ENCODE measurements at regions of chr12 and their contacts with region 1.

Region 1: GRCh38 chr12:62192180-62192902 is 67.9 kb upstream of the USP15 start:
- DNase-seq: peak; percentile 86
- H3K4me3 Mint-ChIP-seq: peak overlapping the region; percentile 73
- H3K27ac Mint-ChIP-seq: peak overlapping the region; percentile 80
- H3K4me1 Mint-ChIP-seq: peaks cover 20% of the 10 kb centered on the region
- H3K27me3 Mint-ChIP-seq: no peaks in the 10 kb centered on the region
- CTCF ChIP-seq: peak; percentile 63

Region 2: GRCh38 chr12:60257063-60257462 is 1935.3 kb before region 1 on chr12:
- CTCF ChIA-PET with region 1: no interaction called
- POLR2A ChIA-PET with region 1: no interaction called
- intact Hi-C with region 1: loop called (anchors 5 kb)
- DNase-seq: peak; percentile 43
- H3K4me3 Mint-ChIP-seq: no peak overlapping the region
- H3K27ac Mint-ChIP-seq: no peak overlapping the region
- H3K4me1 Mint-ChIP-seq: no peaks in the 10 kb centered on the region
- H3K27me3 Mint-ChIP-seq: no peaks in the 10 kb centered on the region
- CTCF ChIP-seq: peak; percentile 16

Region 3: GRCh38 chr12:61654698-61655097 is 537.6 kb before region 1 on chr12:
- CTCF ChIA-PET with region 1: no interaction called
- POLR2A ChIA-PET with region 1: no interaction called
- intact Hi-C with region 1: loop called (anchors 2 kb)
- DNase-seq: peak; percentile 25
- H3K4me3 Mint-ChIP-seq: no peak overlapping the region
- H3K27ac Mint-ChIP-seq: no peak overlapping the region
- H3K4me1 Mint-ChIP-seq: no peaks in the 10 kb centered on the region
- H3K27me3 Mint-ChIP-seq: no peaks in the 10 kb centered on the region
- CTCF ChIP-seq: peak; percentile 21

Region 4: DNA sequence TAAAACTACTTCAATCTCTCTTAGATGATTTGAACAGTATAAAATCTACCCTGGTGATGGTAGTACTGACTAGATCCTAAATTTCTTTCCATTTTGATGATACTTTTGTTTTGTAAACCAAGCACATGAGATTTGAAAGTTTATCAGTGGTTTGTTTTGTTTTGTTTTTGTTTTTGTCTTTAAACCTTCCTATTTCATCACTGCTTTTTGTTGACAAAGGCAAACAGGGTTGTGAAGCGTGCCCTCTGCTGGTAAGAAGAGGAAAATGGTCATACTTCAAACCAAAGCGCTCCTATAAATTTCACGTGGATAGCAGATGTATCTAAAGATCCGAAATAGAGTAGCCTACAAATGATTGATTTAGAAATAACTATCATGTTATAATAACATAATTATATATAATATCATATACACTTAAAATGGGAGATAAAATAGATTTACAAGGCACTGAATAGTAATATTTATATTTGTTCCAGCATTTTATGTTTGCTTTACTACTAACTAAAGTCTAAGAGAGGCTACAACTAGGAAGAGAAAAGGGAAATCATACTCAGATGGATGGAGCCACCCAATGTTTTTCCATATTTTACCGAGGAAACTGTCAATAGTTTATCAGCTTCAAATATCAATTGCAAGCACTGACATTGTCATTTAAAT is 186.1 kb before region 1 on chr12:
- CTCF ChIA-PET with region 1: interaction called, 4 read pairs
- POLR2A ChIA-PET with region 1: no interaction called
- intact Hi-C with region 1: loop called (anchors 2 kb)
- DNase-seq: peak; percentile 63
- H3K4me3 Mint-ChIP-seq: no peak overlapping the region
- H3K27ac Mint-ChIP-seq: no peak overlapping the region
- H3K4me1 Mint-ChIP-seq: no peaks in the 10 kb centered on the region
- H3K27me3 Mint-ChIP-seq: no peaks in the 10 kb centered on the region
- CTCF ChIP-seq: peak; percentile 53

Region 5: GRCh38 chr12:62123721-62124203 is 68.6 kb before region 1 on chr12:
- CTCF ChIA-PET with region 1: interaction called, 16 read pairs
- POLR2A ChIA-PET with region 1: interaction called, 3 read pairs
- intact Hi-C with region 1: loop called (anchors 2 kb)
- DNase-seq: peak; percentile 56
- H3K4me3 Mint-ChIP-seq: no peak overlapping the region
- H3K27ac Mint-ChIP-seq: no peak overlapping the region
- H3K4me1 Mint-ChIP-seq: no peaks in the 10 kb centered on the region
- H3K27me3 Mint-ChIP-seq: no peaks in the 10 kb centered on the region
- CTCF ChIP-seq: peak; percentile 35

Region 6: DNA sequence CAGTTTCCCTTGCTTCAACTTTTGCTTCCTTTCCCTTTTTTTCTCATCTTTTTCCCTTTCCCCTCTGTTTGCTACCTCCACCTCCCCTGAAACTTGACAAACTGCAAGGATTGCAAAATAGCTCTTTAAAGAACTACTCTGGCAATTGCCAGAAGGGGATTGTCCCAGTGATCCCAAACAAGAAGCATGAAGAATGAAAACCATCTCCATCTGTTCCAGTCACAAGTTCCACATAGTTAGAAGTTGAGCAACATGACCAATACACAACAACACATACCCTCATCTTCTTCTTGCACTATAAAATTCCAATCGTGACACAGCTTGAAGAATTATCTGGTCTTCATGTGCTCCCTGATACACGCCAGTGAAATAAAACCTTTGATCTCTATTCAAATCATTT is 25.8 kb before region 1 on chr12:
- CTCF ChIA-PET with region 1: no interaction called
- POLR2A ChIA-PET with region 1: no interaction called
- intact Hi-C with region 1: no loop called
- DNase-seq: no peak
- H3K4me3 Mint-ChIP-seq: no peak overlapping the region
- H3K27ac Mint-ChIP-seq: no peak overlapping the region
- H3K4me1 Mint-ChIP-seq: no peaks in the 10 kb centered on the region
- H3K27me3 Mint-ChIP-seq: no peaks in the 10 kb centered on the region
- CTCF ChIP-seq: no peak

Region 7: GRCh38 chr12:62210422-62210821 is 18.1 kb after region 1 on chr12:
- CTCF ChIA-PET with region 1: interaction called, 30 read pairs
- POLR2A ChIA-PET with region 1: interaction called, 3 read pairs
- intact Hi-C with region 1: no loop called
- DNase-seq: peak; percentile 62
- H3K4me3 Mint-ChIP-seq: peak overlapping the region; percentile 61
- H3K27ac Mint-ChIP-seq: peak overlapping the region; percentile 69
- H3K4me1 Mint-ChIP-seq: peaks cover 11% of the 10 kb centered on the region
- H3K27me3 Mint-ChIP-seq: no peaks in the 10 kb centered on the region
- CTCF ChIP-seq: peak; percentile 76

Region 8: GRCh38 chr12:62259993-62260732 is 67.8 kb after region 1 on chr12 and contains the start of gene USP15:
- CTCF ChIA-PET with region 1: interaction called, 5 read pairs
- POLR2A ChIA-PET with region 1: interaction called, 22 read pairs
- intact Hi-C with region 1: no loop called
- DNase-seq: peak; percentile 95
- H3K4me3 Mint-ChIP-seq: peak within 1 kb of the TSS; percentile 78
- H3K27ac Mint-ChIP-seq: peak within 1 kb of the TSS; percentile 97
- H3K4me1 Mint-ChIP-seq: peaks cover 34% of the 10 kb centered on the region
- H3K27me3 Mint-ChIP-seq: no peaks in the 10 kb centered on the region
- CTCF ChIP-seq: peak; percentile 57
- total RNA-seq, gene USP15: 63.6 and 71.0 TPM in 2 replicates

Region 9: GRCh38 chr12:62673028-62673815 is 480.9 kb after region 1 on chr12:
- CTCF ChIA-PET with region 1: no interaction called
- POLR2A ChIA-PET with region 1: no interaction called
- intact Hi-C with region 1: no loop called
- DNase-seq: no peak
- H3K4me3 Mint-ChIP-seq: no peak overlapping the region
- H3K27ac Mint-ChIP-seq: no peak overlapping the region
- H3K4me1 Mint-ChIP-seq: no peaks in the 10 kb centered on the region
- H3K27me3 Mint-ChIP-seq: no peaks in the 10 kb centered on the region
- CTCF ChIP-seq: no peak